ENCODE measurements at regions of chr9 and their contacts with region 1.

Region 1: DNA sequence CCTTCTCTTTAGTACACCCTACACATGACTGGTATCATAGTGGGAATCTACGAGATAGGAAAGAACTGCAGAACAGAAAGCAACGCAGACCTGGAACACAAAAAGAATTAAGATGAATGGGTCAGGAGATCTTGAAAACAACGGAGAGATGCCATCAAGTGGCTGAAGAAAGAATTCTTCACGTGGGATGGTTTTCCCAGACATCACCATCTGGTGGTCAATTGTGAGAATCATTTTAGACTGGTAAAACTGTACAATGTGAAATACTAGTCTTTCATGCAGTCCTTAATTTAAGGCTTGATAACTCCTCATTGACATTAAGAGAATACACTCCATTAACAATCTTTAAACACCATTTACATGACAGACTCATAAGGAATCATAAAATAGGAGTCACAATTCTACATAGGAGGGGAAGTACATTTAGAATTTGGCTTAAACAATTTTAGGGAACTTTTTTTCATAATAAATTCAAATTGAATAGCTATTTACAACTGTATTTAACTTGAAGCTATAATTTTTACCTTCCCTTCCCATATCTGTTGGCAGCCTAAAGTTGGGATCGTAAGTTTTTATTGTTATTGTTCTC is 128.4 kb upstream of the TRPM3 start:
- DNase-seq: no peak
- ATAC-seq: peak; percentile 61 to 77
- H3K4me3 ChIP-seq: no peak overlapping the region
- H3K27ac ChIP-seq: no peak overlapping the region
- H3K4me1 ChIP-seq: no peaks in the 10 kb centered on the region
- H3K27me3 ChIP-seq: no peaks in the 10 kb centered on the region

Region 2: GRCh38 chr9:70924895-70925547 is 324.8 kb before region 1 on chr9:
- intact Hi-C with region 1: loop called in 2 of 4 experiments (anchors 10 kb)
- DNase-seq: no peak
- ATAC-seq: peak; percentile 92 to 94
- H3K4me3 ChIP-seq: no peak overlapping the region
- H3K27ac ChIP-seq: peak overlapping the region; percentile 26
- H3K4me1 ChIP-seq: no peaks in the 10 kb centered on the region
- H3K27me3 ChIP-seq: no peaks in the 10 kb centered on the region

Region 3: GRCh38 chr9:70935856-70936255 is 314.0 kb before region 1 on chr9:
- intact Hi-C with region 1: loop called in 1 of 4 experiments (anchors 10 kb)
- DNase-seq: no peak
- ATAC-seq: no peak
- H3K4me3 ChIP-seq: no peak overlapping the region
- H3K27ac ChIP-seq: no peak overlapping the region
- H3K4me1 ChIP-seq: no peaks in the 10 kb centered on the region
- H3K27me3 ChIP-seq: no peaks in the 10 kb centered on the region

Region 4: GRCh38 chr9:71349218-71349617 is 99.4 kb after region 1 on chr9:
- intact Hi-C with region 1: no loop called
- DNase-seq: no peak
- ATAC-seq: no peak
- H3K4me3 ChIP-seq: no peak overlapping the region
- H3K27ac ChIP-seq: no peak overlapping the region
- H3K4me1 ChIP-seq: no peaks in the 10 kb centered on the region
- H3K27me3 ChIP-seq: no peaks in the 10 kb centered on the region